ENCODE measurements at regions of chr7 and their contacts with region 1.

Region 1: GRCh38 chr7:47991741-47992311 is 12.4 kb upstream of the HUS1 start:
- DNase-seq: peak; percentile 90
- H3K4me3 ChIP-seq: peak overlapping the region; percentile 68
- H3K27ac ChIP-seq: peak overlapping the region; percentile 79
- H3K4me1 ChIP-seq: peaks cover 19% of the 10 kb centered on the region
- CTCF ChIP-seq: peak; percentile 78

Region 2: DNA sequence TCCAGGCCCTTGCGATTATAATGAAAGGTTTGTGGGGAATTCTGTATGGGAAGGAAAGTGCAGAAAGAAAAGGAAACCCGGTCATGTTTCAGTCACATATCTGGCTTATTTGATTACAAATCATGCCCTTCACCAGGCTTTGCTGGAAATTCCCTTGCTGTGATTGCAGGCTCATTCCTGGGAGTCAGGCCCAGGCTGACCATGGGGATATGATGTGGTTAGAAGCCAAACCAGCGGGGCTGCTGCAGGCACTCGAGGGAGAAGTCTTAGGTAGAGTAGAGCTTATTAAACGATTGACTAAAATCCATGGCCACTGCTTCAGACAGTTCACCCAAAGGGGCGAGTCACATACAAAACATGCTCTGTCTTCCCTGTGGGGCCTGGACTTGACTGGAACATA is 59.8 kb before region 1 on chr7:
- CTCF ChIA-PET with region 1: no interaction called
- POLR2A ChIA-PET with region 1: no interaction called
- intact Hi-C with region 1: no loop called
- DNase-seq: no peak
- H3K4me3 ChIP-seq: no peak overlapping the region
- H3K27ac ChIP-seq: no peak overlapping the region
- H3K4me1 ChIP-seq: peaks cover 12% of the 10 kb centered on the region
- CTCF ChIP-seq: no peak

Region 3: DNA sequence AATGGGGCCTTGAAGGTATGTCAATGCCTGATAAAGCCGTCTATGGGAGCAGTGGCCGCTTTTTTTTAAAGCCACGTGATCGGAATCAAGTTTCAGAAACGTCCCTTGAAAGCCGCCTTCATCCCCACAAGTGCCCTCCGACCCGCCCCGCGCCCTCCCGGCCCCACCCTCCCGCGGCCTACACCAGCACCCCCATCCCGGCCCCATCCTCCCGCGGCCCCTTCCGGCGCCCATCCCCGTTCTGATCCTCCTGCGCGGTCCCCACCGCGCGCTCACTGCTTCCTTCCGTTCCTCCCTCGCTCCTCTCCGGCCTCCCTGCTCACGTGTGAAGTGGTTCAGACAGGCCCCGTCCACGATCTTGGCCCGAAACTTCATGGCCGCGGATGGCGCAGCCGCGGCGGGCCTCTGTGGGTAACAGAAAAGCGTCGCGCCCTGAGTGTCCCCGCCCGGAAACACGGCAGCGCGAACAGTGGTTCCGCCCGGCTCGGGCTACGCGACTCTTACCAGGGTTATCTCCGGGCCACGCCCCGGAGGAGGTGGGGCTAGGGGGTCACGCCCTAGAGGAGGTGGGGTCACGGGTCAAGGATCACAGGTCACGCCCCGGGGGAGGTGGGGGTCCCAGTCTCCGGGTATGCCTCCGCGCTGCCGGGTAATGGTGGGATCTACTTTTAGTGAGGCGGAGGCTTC is 12.5 kb before region 1 on chr7 and contains the start of gene HUS1:
- CTCF ChIA-PET with region 1: interaction called, 4 read pairs
- POLR2A ChIA-PET with region 1: interaction called, 8 read pairs
- intact Hi-C with region 1: loop called (anchors 2 kb)
- DNase-seq: peak; percentile 98
- H3K4me3 ChIP-seq: peak within 1 kb of the TSS; percentile 85
- H3K27ac ChIP-seq: peak within 1 kb of the TSS; percentile 84
- H3K4me1 ChIP-seq: peaks cover 20% of the 10 kb centered on the region
- CTCF ChIP-seq: no peak
- total RNA-seq, gene HUS1: 24.7 and 28.2 TPM in 2 replicates

Region 4: GRCh38 chr7:48004638-48005037 is 12.8 kb after region 1 on chr7:
- CTCF ChIA-PET with region 1: interaction called, 3 read pairs
- POLR2A ChIA-PET with region 1: interaction called, 7 read pairs
- intact Hi-C with region 1: loop called (anchors 1 kb)
- DNase-seq: peak; percentile 74
- H3K4me3 ChIP-seq: peak overlapping the region; percentile 52
- H3K27ac ChIP-seq: peak overlapping the region; percentile 81
- H3K4me1 ChIP-seq: peaks cover 33% of the 10 kb centered on the region
- CTCF ChIP-seq: no peak

Region 5: DNA sequence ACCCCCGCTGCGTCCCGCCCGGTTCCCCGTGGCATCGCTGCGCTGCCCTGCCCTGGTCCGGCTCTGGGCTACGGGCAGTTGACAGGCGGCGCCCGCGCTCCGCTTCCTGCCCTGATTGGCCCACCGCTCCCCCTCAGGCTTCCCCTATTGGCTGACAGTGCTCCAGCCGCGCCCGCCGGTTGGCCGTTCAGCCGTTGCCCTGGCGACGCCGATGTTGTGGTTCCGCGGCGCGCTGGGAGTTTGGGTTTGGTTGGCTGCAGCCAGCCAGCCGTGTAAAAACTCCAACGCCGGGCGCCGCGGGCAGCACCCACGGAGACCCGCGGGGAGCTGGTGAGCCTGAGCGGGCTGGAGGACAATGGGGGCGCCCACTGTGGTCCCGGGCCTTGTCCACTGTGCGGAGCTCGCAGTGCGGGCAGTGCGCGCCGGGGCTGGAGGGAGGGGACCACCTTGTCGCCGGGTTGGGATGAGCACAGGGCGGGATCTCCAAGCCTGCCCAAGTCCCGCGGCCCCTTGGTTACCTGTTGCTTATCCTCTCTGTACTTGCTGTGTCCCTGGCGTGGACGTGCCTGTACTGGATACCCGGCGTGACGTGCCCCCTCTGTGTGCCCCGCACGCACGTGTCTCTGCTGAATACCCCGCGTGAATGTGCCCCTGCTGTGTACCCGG is 43.6 kb after region 1 on chr7 and contains the start of gene C7orf57:
- CTCF ChIA-PET with region 1: no interaction called
- POLR2A ChIA-PET with region 1: no interaction called
- intact Hi-C with region 1: loop called (anchors 2 kb)
- DNase-seq: peak; percentile 84
- H3K4me3 ChIP-seq: peak within 1 kb of the TSS; percentile 73
- H3K27ac ChIP-seq: no peak within 1 kb of the TSS
- H3K4me1 ChIP-seq: no peaks in the 10 kb centered on the region
- CTCF ChIP-seq: peak; percentile 52; the same call in 1 of the 2 replicates
- total RNA-seq, gene C7orf57: 0.25 and 0.59 TPM in 2 replicates

Region 6: GRCh38 chr7:48087349-48087748 is 95.5 kb after region 1 on chr7:
- CTCF ChIA-PET with region 1: no interaction called
- POLR2A ChIA-PET with region 1: interaction called, 3 read pairs
- intact Hi-C with region 1: loop called (anchors 1 kb)
- DNase-seq: peak; percentile 36
- H3K4me3 ChIP-seq: no peak overlapping the region
- H3K27ac ChIP-seq: peak overlapping the region; percentile 16
- H3K4me1 ChIP-seq: peaks cover 31% of the 10 kb centered on the region
- CTCF ChIP-seq: no peak

Region 7: DNA sequence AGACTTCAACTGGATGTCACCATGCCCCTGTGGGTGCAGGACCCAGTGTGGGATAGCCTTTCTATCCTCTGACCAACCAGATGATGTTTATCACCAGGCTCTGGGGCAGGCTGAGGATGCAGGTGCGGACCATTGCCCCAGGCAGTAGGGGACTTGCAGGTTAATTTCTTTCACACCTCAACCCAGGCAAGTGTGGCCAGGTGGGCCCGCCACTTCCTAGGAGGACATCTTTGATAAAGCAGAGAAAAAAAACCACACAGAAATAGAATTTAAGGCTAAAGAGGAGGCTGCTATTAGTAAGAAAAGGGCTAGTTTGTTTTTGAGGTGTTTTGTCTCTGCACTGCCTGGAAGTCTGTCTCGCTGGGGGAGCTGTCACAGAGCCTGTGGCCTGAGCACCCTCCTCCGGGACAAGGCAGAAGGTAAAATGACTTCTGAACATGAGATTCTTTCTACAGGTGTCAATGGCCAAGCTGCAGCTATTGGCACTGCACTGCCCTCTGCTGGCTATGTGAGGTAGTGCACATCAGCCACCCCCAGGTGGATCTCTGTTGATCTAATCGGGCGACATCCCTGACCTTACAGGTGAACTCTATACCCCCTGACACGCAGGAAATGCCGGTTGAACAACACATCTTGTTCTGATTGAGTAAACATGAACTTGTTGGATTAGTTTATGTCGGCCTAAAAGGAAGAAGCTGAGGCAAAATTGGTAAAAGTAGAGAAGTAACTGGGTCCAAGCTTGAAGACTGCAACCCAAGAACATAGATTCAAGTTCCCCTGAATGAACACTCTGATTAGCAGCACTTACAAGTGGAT is 118.2 kb after region 1 on chr7:
- CTCF ChIA-PET with region 1: interaction called, 4 read pairs
- POLR2A ChIA-PET with region 1: interaction called, 7 read pairs
- intact Hi-C with region 1: loop called (anchors 1 kb)
- DNase-seq: peak; percentile 81
- H3K4me3 ChIP-seq: no peak overlapping the region
- H3K27ac ChIP-seq: no peak overlapping the region
- H3K4me1 ChIP-seq: peaks cover 5% of the 10 kb centered on the region
- CTCF ChIP-seq: peak; percentile 99

Region 8: DNA sequence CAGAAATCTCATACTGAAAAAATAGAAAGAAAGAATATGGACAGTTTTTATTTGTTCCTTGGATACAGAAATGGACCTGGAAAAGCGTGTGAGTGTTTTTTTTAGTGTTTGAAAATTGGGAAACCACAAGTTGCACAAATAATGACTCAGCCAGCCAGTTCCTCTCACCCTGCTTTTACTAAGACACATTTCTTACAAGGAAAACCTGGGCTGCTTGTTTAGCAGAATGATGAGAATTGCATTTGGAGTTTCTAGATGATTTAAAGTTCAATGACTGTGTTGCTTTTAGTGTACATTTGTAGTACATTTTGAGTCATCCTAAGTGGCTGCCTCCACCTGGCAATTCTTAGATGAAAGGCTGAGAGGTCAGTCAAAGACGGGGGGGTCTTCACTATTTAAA is 398.2 kb after region 1 on chr7:
- CTCF ChIA-PET with region 1: no interaction called
- POLR2A ChIA-PET with region 1: no interaction called
- intact Hi-C with region 1: no loop called
- DNase-seq: no peak
- H3K4me3 ChIP-seq: no peak overlapping the region
- H3K27ac ChIP-seq: no peak overlapping the region
- H3K4me1 ChIP-seq: no peaks in the 10 kb centered on the region
- CTCF ChIP-seq: no peak

Region 9: GRCh38 chr7:48839108-48839507 is 847.3 kb after region 1 on chr7:
- CTCF ChIA-PET with region 1: no interaction called
- POLR2A ChIA-PET with region 1: no interaction called
- intact Hi-C with region 1: no loop called
- DNase-seq: no peak
- H3K4me3 ChIP-seq: no peak overlapping the region
- H3K27ac ChIP-seq: no peak overlapping the region
- H3K4me1 ChIP-seq: no peaks in the 10 kb centered on the region
- CTCF ChIP-seq: no peak

Measured in OCI-LY7 (cell line).